ENCODE measurements at regions of chr12 and their contacts with region 1.

Region 1: GRCh38 chr12:68236421-68237059 is 10.9 kb upstream of the IL26 start:
- DNase-seq: peak; percentile 27
- CTCF ChIP-seq: no peak

Region 2: DNA sequence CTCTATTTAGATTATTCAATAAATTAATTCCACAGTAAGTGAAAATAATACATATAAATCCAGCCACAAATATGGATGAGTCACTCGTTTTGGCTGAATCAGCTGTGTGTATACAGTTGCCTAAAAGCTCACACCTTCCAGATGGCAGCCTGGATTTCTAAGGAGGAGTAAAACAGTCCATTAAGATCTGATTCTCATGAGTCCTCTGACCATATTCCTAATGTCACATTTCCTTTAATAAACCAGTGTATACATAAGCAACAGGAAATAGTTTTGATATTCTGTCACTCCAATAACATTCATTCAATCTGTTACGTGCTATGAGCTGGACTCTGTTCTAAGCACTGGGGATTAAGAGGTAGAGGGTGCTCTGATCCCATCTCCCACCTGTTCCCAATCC is 73.8 kb after region 1 on chr12:
- in situ Hi-C with region 1: loop called (anchors 5 kb)
- DNase-seq: no peak
- CTCF ChIP-seq: no peak

Region 3: DNA sequence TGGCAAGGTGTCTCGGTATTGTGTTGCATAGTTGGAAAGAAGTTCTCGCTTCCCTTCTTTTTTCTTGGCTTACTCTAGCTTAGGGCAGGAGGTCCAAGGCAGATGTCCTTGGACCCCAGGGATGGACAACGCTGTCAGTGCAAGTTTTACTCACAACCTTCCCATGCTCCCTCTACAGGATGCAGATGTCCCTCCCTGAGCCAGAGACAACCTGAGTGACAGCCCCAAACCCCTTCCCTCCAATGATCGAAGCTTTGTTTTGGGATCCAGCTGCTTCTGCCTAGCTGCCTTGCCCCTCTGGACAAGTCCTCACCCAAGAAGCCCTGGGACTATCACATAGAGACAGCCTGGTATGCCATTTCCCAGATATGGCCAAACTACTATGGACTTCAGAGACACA is 262.2 kb after region 1 on chr12:
- in situ Hi-C with region 1: no loop called
- DNase-seq: no peak
- CTCF ChIP-seq: no peak

Measured in GM13976 (cell line).